Breast epithelium (tissue), 4 donors: ENCODE measurements at regions of chr18 and their contacts with region 1.

Region 1: DNA sequence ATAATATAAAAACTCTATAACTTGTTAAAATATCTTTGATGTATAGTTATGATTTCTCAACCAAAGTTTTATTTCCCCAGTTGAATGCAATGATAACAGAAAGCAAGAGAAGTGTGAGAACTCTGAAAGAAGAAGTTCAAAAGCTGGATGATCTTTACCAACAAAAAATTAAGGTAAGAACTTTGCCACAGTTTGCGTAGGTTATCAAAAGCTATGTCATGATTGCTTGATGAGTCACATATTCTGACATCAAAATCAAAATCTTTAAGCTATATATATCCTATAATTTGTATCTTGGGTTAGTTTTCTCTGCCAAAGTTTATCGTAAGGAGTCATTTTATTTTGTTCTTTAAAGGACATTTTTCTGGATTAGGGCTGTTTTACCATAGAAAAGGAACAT is 35.0 kb downstream of the NDC80 start:
- DNase-seq: no peak
- H3K4me3 ChIP-seq: no peak overlapping the region
- H3K27ac ChIP-seq: no peak overlapping the region
- H3K4me1 ChIP-seq: no peaks in the 10 kb centered on the region
- H3K27me3 ChIP-seq: no peaks in the 10 kb centered on the region
- CTCF ChIP-seq: no peak
- POLR2A ChIP-seq: no peak

Region 2: DNA sequence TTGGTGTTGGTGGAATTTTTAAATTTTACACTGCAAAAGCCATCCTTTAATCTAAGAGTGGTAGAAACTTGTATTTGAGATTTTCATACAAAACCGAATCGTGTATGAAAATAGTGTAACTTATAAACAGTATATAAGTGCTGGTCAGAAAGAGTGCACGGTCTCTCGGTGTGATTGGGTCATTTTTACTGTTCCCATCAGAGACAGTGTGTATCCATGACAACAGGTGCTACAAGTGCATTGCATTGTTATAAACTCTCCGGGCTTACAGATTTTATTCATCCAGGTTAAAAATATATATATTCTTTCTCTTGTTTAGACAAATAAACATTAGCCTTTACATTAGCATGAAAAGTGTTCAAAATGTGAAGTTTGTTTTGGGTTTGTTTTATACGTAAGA is 756.9 kb before region 1 on chr18:
- intact Hi-C with region 1: no loop called
- DNase-seq: no peak
- H3K4me3 ChIP-seq: no peak overlapping the region
- H3K27ac ChIP-seq: no peak overlapping the region
- H3K4me1 ChIP-seq: no peaks in the 10 kb centered on the region
- H3K27me3 ChIP-seq: no peaks in the 10 kb centered on the region
- CTCF ChIP-seq: no peak
- POLR2A ChIP-seq: no peak

Region 3: DNA sequence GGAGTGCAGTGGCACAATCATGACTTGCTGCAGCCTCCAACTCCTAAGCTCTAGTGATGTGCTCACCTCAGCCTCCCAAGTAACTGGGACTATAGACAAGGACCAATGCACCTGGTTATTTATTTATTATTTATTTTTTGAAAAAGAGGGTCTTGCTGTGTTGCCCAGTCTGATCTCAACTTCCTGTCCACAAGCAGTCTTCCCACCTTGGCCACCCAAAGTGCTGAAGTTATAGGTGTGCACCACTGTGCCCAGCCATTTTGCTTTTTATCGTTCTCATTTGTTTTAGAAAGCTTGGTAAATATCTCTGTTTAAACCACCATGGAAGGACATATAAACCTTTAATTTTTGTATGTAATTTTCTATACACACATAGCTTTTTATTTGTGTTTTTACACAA is 123.4 kb after region 1 on chr18:
- intact Hi-C with region 1: loop called (anchors 5 kb)
- DNase-seq: no peak
- H3K4me3 ChIP-seq: no peak overlapping the region
- H3K27ac ChIP-seq: no peak overlapping the region
- H3K4me1 ChIP-seq: no peaks in the 10 kb centered on the region
- H3K27me3 ChIP-seq: no peaks in the 10 kb centered on the region
- CTCF ChIP-seq: no peak
- POLR2A ChIP-seq: no peak